Ascending aorta (tissue), 2 donors: ENCODE measurements at regions of chr1 and their contacts with region 1.

Region 1: GRCh38 chr1:158177700-158178450 is 2.8 kb upstream of the CD1D start:
- DNase-seq: peak; percentile 75 to 93
- H3K4me3 ChIP-seq: peak overlapping the region; percentile 51 to 70
- H3K27ac ChIP-seq: peak overlapping the region in 1 of 2 donors; percentile 3
- H3K4me1 ChIP-seq: peaks cover 0 to 8% of the 10 kb centered on the region in 2 donors
- H3K27me3 ChIP-seq: no peaks in the 10 kb centered on the region
- CTCF ChIP-seq: no peak

Region 2: DNA sequence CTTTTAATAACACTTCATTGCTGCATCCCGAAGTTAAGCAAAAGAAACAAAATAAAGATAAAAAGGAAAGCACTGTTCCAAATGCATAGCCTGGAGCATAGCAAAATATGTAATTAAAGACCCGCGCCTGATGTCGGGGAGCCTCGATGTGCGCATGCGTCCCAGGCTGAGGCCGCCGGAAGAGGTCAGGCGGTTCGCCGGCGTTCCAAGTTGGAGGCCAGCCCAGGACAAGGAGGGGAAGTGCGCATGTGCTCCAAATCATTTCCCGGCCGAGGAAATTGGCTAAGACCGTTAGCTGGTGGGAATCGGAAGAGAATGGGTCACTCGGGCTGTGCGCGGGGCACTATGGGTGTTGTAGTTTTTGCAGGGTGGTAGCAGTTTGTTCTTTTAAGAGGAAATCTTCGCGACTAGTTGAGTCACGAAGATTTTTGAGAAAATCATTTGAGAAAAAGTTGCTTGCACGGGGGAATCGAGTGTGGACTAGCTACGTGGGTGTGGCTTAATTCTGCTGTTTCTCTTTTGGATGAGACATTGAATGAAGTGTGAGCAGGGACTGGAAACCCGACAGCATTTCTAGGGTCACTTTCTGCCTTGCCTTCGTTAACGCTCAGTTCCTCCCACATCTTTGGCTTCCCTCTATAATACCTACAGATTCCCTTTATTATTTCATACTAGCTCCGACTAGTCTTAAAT is 28.2 kb before region 1 on chr1:
- intact Hi-C with region 1: loop called (anchors 2 kb)
- DNase-seq: peak; percentile 82 to 98
- H3K4me3 ChIP-seq: peak overlapping the region; percentile 56
- H3K27ac ChIP-seq: peak overlapping the region; percentile 70 to 72
- H3K4me1 ChIP-seq: peaks cover 0 to 8% of the 10 kb centered on the region in 2 donors
- H3K27me3 ChIP-seq: no peaks in the 10 kb centered on the region
- CTCF ChIP-seq: no peak

Region 3: GRCh38 chr1:158638146-158638545 is 460.3 kb after region 1 on chr1:
- intact Hi-C with region 1: no loop called
- DNase-seq: no peak
- H3K4me3 ChIP-seq: no peak overlapping the region
- H3K27ac ChIP-seq: no peak overlapping the region
- H3K4me1 ChIP-seq: no peaks in the 10 kb centered on the region
- H3K27me3 ChIP-seq: no peaks in the 10 kb centered on the region
- CTCF ChIP-seq: no peak